ENCODE measurements at regions of chr7 and their contacts with region 1.

Region 1: DNA sequence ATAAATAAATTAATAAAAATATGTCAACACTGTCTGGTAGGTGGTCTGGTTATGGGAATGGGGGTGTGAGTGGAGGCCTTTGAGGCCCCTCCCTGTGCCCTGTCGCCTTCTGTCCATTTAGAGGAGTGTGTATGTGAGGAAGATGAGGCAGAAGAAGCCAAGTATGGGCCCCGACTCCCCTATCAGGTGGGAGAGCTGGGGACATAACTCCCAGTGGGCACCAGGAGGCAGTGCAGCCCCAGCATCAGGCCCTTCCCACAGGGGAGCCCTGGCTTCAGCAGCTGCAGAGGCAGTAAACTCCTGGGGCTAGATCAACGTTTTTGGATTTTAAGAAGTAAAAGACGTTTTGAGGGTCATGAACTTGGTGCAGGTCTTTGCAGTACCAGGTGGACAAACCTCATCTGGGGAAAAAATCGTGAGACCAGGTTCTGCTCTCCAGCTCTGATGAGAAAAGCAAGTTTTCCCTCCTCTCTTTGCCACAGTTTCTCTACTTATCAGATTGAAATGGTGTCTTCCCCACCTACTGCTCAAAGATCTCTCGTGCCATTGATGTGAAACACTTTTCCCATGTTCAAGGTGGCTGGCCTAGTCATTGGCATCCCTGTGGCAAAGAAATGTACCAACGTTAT is 167.8 kb upstream of the EEPD1 start:
- DNase-seq: peak; percentile 89 to 92
- ATAC-seq: peak; percentile 91
- H3K4me3 ChIP-seq: no peak overlapping the region
- H3K27ac ChIP-seq: no peak overlapping the region
- H3K4me1 ChIP-seq: peaks cover 3 to 4% of the 10 kb centered on the region in 2 donors
- H3K27me3 ChIP-seq: no peaks in the 10 kb centered on the region

Region 2: GRCh38 chr7:35906191-35906908 is 78.9 kb before region 1 on chr7:
- intact Hi-C with region 1: no loop called
- DNase-seq: no peak
- ATAC-seq: peak; percentile 89
- H3K4me3 ChIP-seq: no peak overlapping the region
- H3K27ac ChIP-seq: no peak overlapping the region
- H3K4me1 ChIP-seq: no peaks in the 10 kb centered on the region
- H3K27me3 ChIP-seq: no peaks in the 10 kb centered on the region

Region 3: GRCh38 chr7:36048141-36048901 is 63.1 kb after region 1 on chr7:
- intact Hi-C with region 1: loop called in 1 of 2 experiments (anchors 5 kb)
- DNase-seq: no peak
- ATAC-seq: peak; percentile 77
- H3K4me3 ChIP-seq: no peak overlapping the region
- H3K27ac ChIP-seq: peak overlapping the region in 1 of 2 donors; percentile 19
- H3K4me1 ChIP-seq: peaks cover 10 to 15% of the 10 kb centered on the region in 2 donors
- H3K27me3 ChIP-seq: no peaks in the 10 kb centered on the region

Region 4: DNA sequence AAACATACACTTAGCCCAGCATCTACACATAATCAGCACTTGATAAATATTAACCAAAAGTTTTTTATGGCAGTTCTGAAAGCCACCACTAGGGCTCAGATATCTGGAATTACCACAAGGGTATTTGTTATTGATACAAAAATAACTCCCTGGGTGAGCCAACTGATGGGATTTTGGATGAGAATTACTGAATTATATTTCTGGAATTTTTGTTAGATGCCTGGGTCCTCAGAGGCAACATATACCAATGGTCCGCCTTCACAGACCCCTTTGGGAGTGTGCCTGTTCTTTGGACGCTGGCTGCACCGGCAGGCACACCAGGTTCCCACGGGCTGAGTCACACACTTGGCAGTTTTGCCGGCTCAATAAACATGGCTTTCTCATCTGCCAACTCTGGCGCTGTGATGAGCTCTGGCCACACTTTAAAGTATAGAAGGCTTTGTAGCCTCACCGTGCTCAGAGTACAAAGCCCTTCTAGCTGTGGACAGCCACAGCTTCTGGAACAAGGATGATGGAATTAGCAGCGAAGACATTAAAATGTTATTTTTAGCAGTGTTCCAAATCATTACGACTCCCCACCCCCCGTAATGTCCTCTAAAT is 143.3 kb after region 1 on chr7:
- intact Hi-C with region 1: loop called in 1 of 2 experiments (anchors 5 kb)
- DNase-seq: peak; percentile 91 to 95
- ATAC-seq: peak; percentile 93
- H3K4me3 ChIP-seq: no peak overlapping the region
- H3K27ac ChIP-seq: peak overlapping the region in 1 of 2 donors; percentile 12
- H3K4me1 ChIP-seq: peaks cover 0 to 8% of the 10 kb centered on the region in 2 donors
- H3K27me3 ChIP-seq: no peaks in the 10 kb centered on the region

Region 5: DNA sequence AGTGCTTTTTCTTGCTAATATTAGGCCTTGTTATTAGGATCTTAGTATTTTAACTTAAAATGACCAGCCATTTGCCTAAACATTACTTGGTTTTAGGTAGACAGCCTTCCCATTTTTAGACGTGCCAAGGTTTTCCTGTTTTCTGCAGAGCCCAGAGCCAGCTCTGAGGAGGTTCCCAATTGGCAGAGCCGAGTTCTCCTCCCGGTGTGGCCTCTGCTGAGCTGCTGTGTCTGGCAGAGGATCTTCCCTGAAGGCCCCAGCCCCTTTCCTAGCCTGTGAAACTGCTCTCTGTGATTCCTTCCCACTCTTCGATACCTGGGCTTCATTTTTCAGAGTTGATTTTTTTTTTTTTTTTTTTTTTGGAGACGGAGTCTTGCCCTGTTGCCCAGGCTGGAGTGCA is 259.2 kb after region 1 on chr7:
- intact Hi-C with region 1: no loop called
- DNase-seq: no peak
- ATAC-seq: peak; percentile 57
- H3K4me3 ChIP-seq: no peak overlapping the region
- H3K27ac ChIP-seq: no peak overlapping the region
- H3K4me1 ChIP-seq: peaks cover 0 to 4% of the 10 kb centered on the region in 2 donors
- H3K27me3 ChIP-seq: no peaks in the 10 kb centered on the region

Region 6: DNA sequence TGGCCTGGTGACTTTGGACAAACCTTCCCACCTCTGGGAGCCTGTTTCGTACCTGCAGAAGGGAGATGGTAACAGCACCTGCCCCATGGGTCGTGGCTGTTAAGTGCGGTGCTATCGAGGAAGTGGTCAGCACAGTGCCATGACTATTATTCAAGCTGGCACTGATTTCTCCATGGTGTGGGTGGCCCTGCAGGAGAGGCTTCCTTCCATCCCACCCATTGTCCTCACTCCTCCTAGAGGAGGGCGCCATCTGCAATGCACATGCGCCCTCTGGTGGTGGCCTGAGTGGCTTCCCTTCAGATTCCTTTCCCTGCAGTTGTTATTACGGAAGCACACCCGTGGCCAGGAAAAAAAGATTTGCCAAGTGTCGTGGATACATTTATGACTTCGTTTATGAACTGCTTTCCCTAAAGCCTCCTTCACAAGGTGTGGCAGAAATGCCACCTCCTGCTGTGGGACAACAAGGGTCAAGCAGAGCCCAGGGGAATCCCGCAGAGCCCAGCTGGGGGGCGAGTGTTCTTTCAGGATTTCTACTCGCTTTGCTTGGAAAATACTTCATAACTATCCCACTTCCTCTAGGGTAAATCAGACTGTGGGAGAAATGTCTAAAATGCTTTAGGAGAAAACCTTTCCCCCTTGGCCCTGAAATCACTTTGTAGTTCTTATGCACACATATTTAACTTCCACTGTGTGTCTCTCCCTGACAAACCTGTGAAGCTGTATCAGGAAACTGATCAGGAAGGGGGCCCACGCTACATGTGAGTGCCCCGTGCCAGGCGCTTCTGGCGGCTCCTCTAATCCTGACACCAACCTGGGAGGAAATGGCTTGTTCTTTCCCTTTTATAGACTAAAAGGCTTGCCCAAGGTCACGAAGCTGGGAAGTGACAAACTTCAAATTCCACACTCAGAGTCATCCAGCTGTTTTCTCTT is 306.4 kb after region 1 on chr7:
- intact Hi-C with region 1: loop called (anchors 1 to 2 kb)
- DNase-seq: peak; percentile 89 to 96
- ATAC-seq: peak; percentile 95
- H3K4me3 ChIP-seq: peak overlapping the region in 1 of 2 donors; percentile 16
- H3K27ac ChIP-seq: peak overlapping the region; percentile 84 to 87
- H3K4me1 ChIP-seq: no peaks in the 10 kb centered on the region
- H3K27me3 ChIP-seq: no peaks in the 10 kb centered on the region